Naive thymus-derived CD8-positive, alpha-beta T cell (primary cell): ENCODE measurements at regions of chr16 and their contacts with region 1.

Region 1: DNA sequence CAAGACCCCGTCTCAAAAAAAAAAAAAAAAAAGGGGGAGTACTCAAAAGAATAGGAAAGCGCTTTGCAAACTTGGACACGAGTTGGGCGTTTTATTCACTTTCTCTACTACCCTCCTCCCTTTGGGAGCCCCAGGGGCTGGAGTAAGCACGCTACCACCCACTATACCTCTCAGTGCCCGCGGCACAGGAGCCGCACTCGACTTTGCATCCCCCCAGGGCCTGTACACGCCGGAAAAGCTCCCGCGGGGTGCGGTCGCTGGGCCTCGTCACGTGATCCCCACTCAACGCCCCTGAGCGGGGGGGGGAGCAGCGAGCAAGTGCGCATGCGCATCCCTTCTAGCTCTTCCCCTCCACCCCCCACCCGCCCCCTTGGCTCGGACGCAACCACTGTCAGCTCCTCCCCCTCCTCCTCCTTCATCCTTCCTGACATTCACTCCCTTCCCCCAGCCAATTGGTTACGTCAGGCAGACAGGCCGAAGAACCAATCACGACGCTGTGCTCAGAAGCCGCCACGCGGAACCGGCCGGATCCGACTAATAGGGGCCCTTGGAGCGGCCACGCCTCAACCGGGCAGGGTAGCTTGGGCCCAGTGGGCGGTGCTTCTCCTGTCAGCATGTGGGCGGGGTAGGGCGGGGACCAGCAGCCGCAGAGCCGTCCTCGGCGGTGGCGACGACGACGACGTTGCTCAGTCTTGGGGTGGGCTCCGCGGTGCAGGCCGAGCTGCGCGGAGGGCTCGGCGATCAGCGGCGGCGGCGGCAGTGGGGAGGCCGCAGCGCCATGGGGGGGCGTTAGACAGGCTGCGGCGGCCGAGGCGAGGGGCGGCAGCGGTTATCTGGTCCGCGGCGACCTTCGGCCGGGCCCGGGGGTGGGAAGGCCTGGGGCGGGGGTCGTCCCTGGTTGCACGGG is at the start of gene HAPSTR1:
- DNase-seq: peak; percentile 91 to 100 (median 100)
- ATAC-seq: peak; percentile 84 to 89
- H3K4me3 Mint-ChIP-seq: peak within 1 kb of the TSS; percentile 95 to 100 (median 98)
- H3K27ac Mint-ChIP-seq: peak within 1 kb of the TSS; percentile 92 to 99 (median 99)
- H3K4me1 Mint-ChIP-seq: peaks cover 23 to 44% (median 36%) of the 10 kb centered on the region in 4 donors
- H3K27me3 Mint-ChIP-seq: peaks cover 0 to 4% (median 0%) of the 10 kb centered on the region in 5 donors
- polyA plus RNA-seq, gene HAPSTR1: 9.9 to 16.5 (median 10.6) TPM

Region 2: DNA sequence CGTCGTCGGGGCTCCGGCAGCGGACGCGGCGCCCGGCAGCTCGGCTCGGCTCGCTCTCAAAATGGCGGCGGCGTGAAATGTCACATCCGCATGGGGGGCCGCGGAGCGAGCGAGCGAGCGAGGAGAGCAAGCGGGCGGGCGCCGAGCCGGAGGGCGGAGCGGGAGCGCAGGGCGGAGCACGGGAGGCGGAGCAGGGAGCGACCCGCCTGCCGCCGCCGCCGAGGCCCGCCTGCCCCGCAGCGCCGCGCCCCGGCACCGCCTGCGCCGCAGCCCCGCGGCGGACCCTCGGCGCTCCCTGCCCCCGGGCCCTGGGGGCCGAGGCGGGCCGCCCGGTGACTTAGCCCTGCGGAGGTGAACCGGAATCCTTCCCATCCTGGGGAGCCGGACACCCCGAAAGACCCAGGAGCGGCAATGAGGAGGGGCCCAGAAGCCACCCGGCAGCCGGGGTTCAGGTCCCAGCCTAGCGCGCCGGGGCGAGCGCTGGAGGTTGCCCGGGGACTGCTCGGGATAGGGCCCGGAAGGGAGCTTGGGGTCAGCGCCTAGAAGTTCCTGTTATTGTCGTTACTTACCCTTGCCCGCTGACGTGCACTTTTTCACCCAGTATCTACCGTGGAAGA is 127.3 kb before region 1 on chr16 and contains the start of gene USP7:
- POLR2A ChIA-PET with region 1: interaction called, 43 read pairs
- DNase-seq: peak; percentile 82 to 94 (median 92)
- ATAC-seq: peak; percentile 86 to 89
- H3K4me3 Mint-ChIP-seq: peak within 1 kb of the TSS; percentile 85 to 99 (median 96)
- H3K27ac Mint-ChIP-seq: peak within 1 kb of the TSS; percentile 75 to 98 (median 96)
- H3K4me1 Mint-ChIP-seq: peaks cover 27 to 48% (median 37%) of the 10 kb centered on the region in 4 donors
- H3K27me3 Mint-ChIP-seq: peaks cover 0 to 2% (median 0%) of the 10 kb centered on the region in 5 donors
- polyA plus RNA-seq, gene USP7: 6.4 to 9.9 (median 9.2) TPM

Region 3: DNA sequence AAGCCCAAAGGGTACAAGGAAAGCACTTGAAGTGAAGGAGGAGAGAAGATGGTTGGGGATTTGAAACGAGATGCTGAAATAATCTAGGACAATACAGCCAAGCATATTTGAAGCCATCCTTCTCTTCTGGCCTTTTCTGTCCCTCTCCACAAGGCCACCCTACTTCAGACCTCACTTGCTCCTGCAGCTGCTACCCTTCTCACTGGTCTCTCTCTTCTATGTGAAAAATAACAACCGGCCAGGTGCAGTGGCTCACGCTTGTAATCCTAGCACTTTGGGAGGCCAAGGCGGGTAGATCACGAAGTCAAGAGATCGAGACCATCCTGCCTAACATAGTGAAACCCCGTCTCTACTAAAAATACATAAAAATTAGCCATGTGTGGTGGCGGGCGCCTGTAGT is 33.0 kb before region 1 on chr16:
- POLR2A ChIA-PET with region 1: no interaction called
- DNase-seq: no peak
- ATAC-seq: no peak
- H3K4me3 Mint-ChIP-seq: no peak overlapping the region
- H3K27ac Mint-ChIP-seq: peak overlapping the region in 1 of 10 donors; percentile 11
- H3K4me1 Mint-ChIP-seq: peaks cover 7 to 11% (median 8%) of the 10 kb centered on the region in 4 donors
- H3K27me3 Mint-ChIP-seq: peaks cover 2 to 6% (median 4%) of the 10 kb centered on the region in 5 donors

Region 4: GRCh38 chr16:9077091-9077809 is 14.0 kb before region 1 on chr16:
- POLR2A ChIA-PET with region 1: interaction called, 46 read pairs
- DNase-seq: no peak
- ATAC-seq: no peak
- H3K4me3 Mint-ChIP-seq: no peak overlapping the region
- H3K27ac Mint-ChIP-seq: peak overlapping the region in 4 of 10 donors; percentile 29 to 86 (median 52)
- H3K4me1 Mint-ChIP-seq: peaks cover 4 to 36% (median 19%) of the 10 kb centered on the region in 4 donors
- H3K27me3 Mint-ChIP-seq: no peaks in the 10 kb centered on the region

Region 5: GRCh38 chr16:9119795-9120194 is 28.6 kb after region 1 on chr16:
- POLR2A ChIA-PET with region 1: interaction called, 12 read pairs
- DNase-seq: no peak
- ATAC-seq: no peak
- H3K4me3 Mint-ChIP-seq: no peak overlapping the region
- H3K27ac Mint-ChIP-seq: peak overlapping the region in 7 of 10 donors; percentile 1 to 74 (median 42)
- H3K4me1 Mint-ChIP-seq: peaks cover 25 to 78% (median 66%) of the 10 kb centered on the region in 4 donors
- H3K27me3 Mint-ChIP-seq: no peaks in the 10 kb centered on the region